Activated CD4-positive, alpha-beta memory T cell treated with anti-CD3 and anti-CD28 coated beads, Interleukin-2, amount 10 ng/mL, durations not matched to agents 7 days and 5 days (primary cell): ENCODE measurements at regions of chr1 and their contacts with region 1.

Region 1: GRCh38 chr1:154479764-154480421 is 22.1 kb upstream of the TDRD10 start:
- DNase-seq: peak; percentile 65
- H3K4me3 Mint-ChIP-seq: no peak overlapping the region
- H3K27ac Mint-ChIP-seq: no peak overlapping the region
- H3K4me1 Mint-ChIP-seq: peaks cover 22% of the 10 kb centered on the region
- H3K27me3 Mint-ChIP-seq: peaks cover 10% of the 10 kb centered on the region

Region 2: DNA sequence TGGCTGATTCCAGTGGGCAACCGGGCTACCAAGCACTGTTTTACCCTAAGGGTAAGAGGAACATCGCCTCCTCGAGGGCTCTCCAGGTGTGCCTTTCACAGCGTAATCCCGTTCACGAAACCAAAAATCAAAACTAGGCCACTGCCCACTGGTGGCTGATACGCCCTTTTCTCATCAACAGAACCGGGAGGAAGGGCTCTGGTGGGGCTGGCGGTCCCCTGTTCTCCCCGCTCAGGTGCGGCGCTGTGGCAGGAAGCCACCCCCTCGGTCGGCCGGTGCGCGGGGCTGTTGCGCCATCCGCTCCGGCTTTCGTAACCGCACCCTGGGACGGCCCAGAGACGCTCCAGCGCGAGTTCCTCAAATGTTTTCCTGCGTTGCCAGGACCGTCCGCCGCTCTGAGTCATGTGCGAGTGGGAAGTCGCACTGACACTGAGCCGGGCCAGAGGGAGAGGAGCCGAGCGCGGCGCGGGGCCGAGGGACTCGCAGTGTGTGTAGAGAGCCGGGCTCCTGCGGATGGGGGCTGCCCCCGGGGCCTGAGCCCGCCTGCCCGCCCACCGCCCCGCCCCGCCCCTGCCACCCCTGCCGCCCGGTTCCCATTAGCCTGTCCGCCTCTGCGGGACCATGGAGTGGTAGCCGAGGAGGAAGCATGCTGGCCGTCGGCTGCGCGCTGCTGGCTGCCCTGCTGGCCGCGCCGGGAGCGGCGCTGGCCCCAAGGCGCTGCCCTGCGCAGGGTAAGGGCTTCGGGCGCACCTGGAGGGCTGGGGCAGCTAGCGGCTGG is 74.7 kb before region 1 on chr1 and contains the start of gene IL6R:
- CTCF ChIA-PET with region 1: interaction called, 13 read pairs
- POLR2A ChIA-PET with region 1: interaction called, 5 read pairs
- DNase-seq: peak; percentile 74
- H3K4me3 Mint-ChIP-seq: peak within 1 kb of the TSS; percentile 77
- H3K27ac Mint-ChIP-seq: peak within 1 kb of the TSS; percentile 88
- H3K4me1 Mint-ChIP-seq: peaks cover 83% of the 10 kb centered on the region
- H3K27me3 Mint-ChIP-seq: peaks cover 19% of the 10 kb centered on the region
- total RNA-seq, gene IL6R: 15.7 to 16.0 TPM

Region 3: GRCh38 chr1:154463512-154463990 is 16.3 kb before region 1 on chr1:
- CTCF ChIA-PET with region 1: interaction called, 14 read pairs
- POLR2A ChIA-PET with region 1: interaction called, 3 read pairs
- DNase-seq: peak; percentile 79
- H3K4me3 Mint-ChIP-seq: peak overlapping the region; percentile 22
- H3K27ac Mint-ChIP-seq: peak overlapping the region; percentile 75
- H3K4me1 Mint-ChIP-seq: peaks cover 73% of the 10 kb centered on the region
- H3K27me3 Mint-ChIP-seq: no peaks in the 10 kb centered on the region

Region 4: GRCh38 chr1:154493276-154493675 is 13.4 kb after region 1 on chr1:
- CTCF ChIA-PET with region 1: interaction called, 44 read pairs
- POLR2A ChIA-PET with region 1: no interaction called
- DNase-seq: peak; percentile 44
- H3K4me3 Mint-ChIP-seq: no peak overlapping the region
- H3K27ac Mint-ChIP-seq: peak overlapping the region; percentile 58
- H3K4me1 Mint-ChIP-seq: peaks cover 32% of the 10 kb centered on the region
- H3K27me3 Mint-ChIP-seq: peaks cover 19% of the 10 kb centered on the region

Region 5: DNA sequence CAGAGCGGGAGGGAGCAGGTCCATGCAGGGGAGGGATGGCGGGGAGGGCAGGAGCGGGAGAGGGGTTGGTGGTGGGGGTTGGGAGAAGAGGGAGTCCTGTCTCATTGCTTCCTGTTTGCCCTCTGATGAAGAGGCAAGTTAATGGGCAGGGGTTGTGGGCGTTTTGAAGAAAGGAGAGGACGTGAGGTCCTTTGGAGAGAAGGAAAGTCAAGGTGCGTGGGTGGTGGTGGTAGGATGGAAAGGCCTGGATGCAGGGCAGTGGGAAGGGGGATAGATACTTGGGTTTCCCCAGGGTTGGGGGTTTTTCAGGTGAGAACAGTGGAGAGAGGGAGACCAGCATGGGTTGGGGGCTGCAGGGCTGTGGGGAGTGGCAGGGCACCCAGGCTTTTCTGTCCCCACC is 61.3 kb after region 1 on chr1:
- CTCF ChIA-PET with region 1: interaction called, 111 read pairs
- POLR2A ChIA-PET with region 1: no interaction called
- DNase-seq: no peak
- H3K4me3 Mint-ChIP-seq: no peak overlapping the region
- H3K27ac Mint-ChIP-seq: no peak overlapping the region
- H3K4me1 Mint-ChIP-seq: no peaks in the 10 kb centered on the region
- H3K27me3 Mint-ChIP-seq: peaks cover 26% of the 10 kb centered on the region

Region 6: GRCh38 chr1:154546264-154547063 is 66.6 kb after region 1 on chr1:
- CTCF ChIA-PET with region 1: interaction called, 111 read pairs
- POLR2A ChIA-PET with region 1: interaction called, 4 read pairs
- DNase-seq: peak; percentile 58
- H3K4me3 Mint-ChIP-seq: no peak overlapping the region
- H3K27ac Mint-ChIP-seq: no peak overlapping the region
- H3K4me1 Mint-ChIP-seq: peaks cover 12% of the 10 kb centered on the region
- H3K27me3 Mint-ChIP-seq: peaks cover 4% of the 10 kb centered on the region

Region 7: GRCh38 chr1:154583773-154584172 is 103.9 kb after region 1 on chr1:
- CTCF ChIA-PET with region 1: no interaction called
- POLR2A ChIA-PET with region 1: no interaction called
- DNase-seq: no peak
- H3K4me3 Mint-ChIP-seq: no peak overlapping the region
- H3K27ac Mint-ChIP-seq: no peak overlapping the region
- H3K4me1 Mint-ChIP-seq: peaks cover 25% of the 10 kb centered on the region
- H3K27me3 Mint-ChIP-seq: no peaks in the 10 kb centered on the region

Region 8: DNA sequence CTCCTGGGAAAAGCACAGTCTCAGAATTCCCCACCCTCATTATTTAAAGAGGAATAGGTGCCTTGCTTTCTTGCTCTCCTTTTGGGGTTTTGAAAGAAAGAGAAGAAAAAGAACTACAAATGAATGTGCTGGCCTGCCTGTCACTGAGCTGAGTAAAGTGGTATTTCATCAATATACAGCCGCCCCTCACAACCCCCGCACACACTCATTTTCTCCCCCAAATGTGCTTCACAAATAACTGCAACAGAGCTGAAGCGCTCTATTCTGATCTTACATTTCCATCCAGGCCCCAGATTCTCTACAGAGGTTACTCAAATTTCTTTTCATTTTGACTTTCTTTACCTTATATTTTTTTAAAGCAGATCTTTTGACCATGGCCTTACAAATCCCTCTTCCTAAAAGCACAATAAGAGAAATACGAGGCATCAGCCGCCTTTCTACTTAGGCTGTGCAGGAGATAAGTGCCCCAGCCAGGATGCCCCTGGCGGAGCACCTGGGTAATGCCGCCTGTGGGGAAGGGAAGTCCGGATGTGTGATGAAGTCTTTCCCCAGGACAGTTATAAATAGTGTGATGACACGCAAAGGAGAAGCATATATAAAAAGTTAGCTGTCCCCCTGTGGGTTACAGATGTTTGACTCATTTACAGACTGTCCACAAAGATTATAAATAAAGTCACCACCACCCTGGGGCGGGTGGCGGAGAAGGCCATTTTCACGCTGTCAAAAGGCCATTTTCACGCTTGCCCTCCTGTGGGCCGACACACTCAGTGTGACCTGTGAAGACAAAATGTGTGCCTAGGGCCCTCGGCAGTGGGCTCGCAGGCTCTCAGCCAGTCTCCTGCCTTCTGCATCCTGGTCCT is 383.7 kb after region 1 on chr1:
- CTCF ChIA-PET with region 1: no interaction called
- POLR2A ChIA-PET with region 1: no interaction called
- DNase-seq: peak; percentile 40
- H3K4me3 Mint-ChIP-seq: no peak overlapping the region
- H3K27ac Mint-ChIP-seq: no peak overlapping the region
- H3K4me1 Mint-ChIP-seq: peaks cover 15% of the 10 kb centered on the region
- H3K27me3 Mint-ChIP-seq: peaks cover 25% of the 10 kb centered on the region

Region 9: GRCh38 chr1:154884869-154885701 is 405.2 kb after region 1 on chr1:
- CTCF ChIA-PET with region 1: no interaction called
- POLR2A ChIA-PET with region 1: no interaction called
- DNase-seq: no peak
- H3K4me3 Mint-ChIP-seq: no peak overlapping the region
- H3K27ac Mint-ChIP-seq: no peak overlapping the region
- H3K4me1 Mint-ChIP-seq: peaks cover 27% of the 10 kb centered on the region
- H3K27me3 Mint-ChIP-seq: peaks cover 9% of the 10 kb centered on the region